ENCODE measurements at regions of chr2 and their contacts with region 1.

Region 1: DNA sequence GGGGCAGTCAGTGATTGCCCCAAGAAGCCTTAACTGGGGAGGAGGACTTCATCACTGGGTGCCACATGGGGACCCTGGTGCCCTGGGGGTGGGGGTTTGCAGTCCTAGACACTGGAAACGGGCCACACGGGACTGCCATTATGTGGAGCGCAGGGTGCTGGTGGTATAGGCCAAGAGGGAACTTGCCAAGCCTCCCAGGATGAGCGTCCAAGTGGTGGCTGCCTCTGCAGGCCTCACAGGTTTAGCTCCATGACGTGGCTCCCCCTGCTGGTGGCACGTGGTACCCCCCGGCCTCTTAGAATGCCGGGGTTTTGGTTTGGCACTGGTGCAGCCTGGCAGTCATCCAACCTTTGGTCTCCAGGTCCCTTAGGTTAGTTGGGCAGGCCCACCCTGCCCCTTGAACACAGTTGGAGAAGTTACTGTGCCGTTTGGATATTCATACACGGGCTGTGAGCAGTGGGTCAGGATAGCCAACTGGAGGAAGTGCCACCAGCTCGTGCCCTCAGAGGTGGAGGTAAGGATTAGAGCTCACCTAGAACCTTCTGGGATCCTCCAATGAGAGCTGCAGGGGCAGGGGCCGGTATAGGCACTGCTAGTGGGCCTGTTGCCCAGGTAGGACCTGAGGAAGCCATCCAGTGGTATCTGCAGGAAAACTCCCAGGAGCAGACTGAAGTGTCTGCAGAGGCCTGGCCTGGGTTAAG is 5.6 kb downstream of the PTMA start:
- DNase-seq: no peak
- H3K4me3 ChIP-seq: no peak overlapping the region
- CTCF ChIP-seq: peak; percentile 98

Region 2: GRCh38 chr2:231482806-231483391 is 231.0 kb before region 1 on chr2:
- CTCF ChIA-PET with region 1: no interaction called
- POLR2A ChIA-PET with region 1: no interaction called
- DNase-seq: no peak
- H3K4me3 ChIP-seq: peak overlapping the region; percentile 41
- CTCF ChIP-seq: peak; percentile 95

Region 3: DNA sequence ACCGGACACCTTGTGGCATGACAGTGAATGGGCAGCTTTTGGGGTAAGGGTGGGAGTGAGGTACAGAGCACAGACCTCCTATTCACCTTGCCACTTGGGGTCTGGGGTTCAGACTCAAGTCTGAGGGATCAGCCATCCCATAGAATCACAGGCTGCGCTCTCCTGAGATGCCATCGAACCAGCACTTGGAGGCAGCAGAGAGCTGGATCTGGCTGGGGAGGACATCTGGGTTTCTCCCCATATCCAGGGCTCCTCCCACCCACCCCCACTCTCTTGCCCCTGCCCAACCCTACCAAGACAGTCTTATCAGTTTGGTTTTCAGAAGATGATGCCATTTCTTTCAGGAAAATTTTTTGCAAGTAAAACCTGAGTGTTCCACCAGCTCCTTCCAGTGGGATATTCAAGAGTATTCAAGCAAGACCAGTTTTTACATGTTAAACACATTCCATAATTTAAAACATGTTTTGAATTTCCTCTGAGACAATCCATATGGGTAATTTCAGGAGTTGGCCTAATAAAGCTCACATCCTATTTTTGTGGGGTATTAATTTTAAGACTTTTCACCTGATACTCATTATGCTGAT is 150.4 kb before region 1 on chr2:
- CTCF ChIA-PET with region 1: interaction called, 10 read pairs
- POLR2A ChIA-PET with region 1: no interaction called
- DNase-seq: no peak
- H3K4me3 ChIP-seq: no peak overlapping the region
- CTCF ChIP-seq: peak; percentile 79

Region 4: DNA sequence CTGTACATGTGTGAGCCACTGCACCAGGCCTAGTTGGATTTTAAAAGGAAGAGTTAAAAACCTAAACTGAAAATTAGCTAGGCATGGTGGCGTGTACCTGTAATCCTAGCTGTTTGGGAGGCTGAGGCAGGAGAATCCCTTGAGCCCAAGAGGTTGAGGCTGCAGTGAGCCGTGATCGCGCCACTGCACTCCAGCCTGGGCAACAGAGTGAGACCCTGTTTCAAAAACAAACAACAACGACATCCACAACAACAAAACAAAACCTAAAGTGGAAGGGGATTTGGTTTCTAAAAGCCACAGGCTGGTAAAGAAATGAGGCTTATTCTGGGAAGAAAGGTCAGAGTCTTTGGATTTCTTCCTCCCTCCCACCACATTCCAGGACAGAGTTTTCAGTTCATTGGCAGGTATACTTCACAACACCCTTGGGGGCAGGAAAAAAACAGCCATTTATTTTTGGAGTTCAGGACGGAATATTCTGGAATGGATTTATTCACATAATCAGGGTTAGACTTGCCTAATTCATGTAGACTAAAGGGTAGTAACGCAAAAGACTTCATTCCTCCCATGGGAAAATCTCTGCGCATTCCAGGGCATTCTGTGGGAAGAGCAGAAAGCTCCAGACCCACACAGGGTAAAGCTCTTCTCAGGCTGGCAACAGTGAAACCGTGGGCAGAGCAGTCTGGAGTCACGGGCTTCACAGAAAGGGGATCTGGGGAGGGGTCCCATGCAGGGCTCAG is 86.3 kb before region 1 on chr2:
- CTCF ChIA-PET with region 1: interaction called, 47 read pairs
- POLR2A ChIA-PET with region 1: no interaction called
- DNase-seq: peak; percentile 74
- H3K4me3 ChIP-seq: peak overlapping the region; percentile 18
- CTCF ChIP-seq: no peak

Region 5: GRCh38 chr2:231662028-231662810 is 51.7 kb before region 1 on chr2:
- CTCF ChIA-PET with region 1: interaction called, 20 read pairs
- POLR2A ChIA-PET with region 1: interaction called, 11 read pairs
- DNase-seq: peak; percentile 61
- H3K4me3 ChIP-seq: peak overlapping the region; percentile 43
- CTCF ChIP-seq: no peak

Region 6: DNA sequence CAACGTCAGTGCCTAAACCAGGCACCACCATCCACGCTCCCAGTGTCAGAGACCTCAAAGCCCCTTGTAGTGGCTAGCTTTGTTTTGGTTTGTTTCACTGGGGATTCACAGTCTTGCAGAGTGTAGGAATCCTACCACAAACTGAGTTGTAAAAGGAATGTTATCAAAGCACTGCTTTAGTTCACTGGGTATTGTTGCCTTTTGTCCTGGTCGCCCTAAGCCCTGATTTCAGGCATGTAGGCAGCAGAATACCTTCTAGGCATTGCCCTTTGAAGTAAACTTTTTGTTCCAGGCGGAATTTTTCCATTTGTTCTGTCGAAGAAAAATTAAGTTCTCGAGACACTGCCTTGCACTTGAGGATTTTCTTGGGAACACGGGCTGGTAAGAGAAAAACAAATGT is 23.9 kb after region 1 on chr2:
- CTCF ChIA-PET with region 1: interaction called, 10 read pairs
- POLR2A ChIA-PET with region 1: no interaction called
- DNase-seq: no peak
- H3K4me3 ChIP-seq: no peak overlapping the region
- CTCF ChIP-seq: no peak

Region 7: GRCh38 chr2:231795291-231796040 is 81.6 kb after region 1 on chr2:
- CTCF ChIA-PET with region 1: interaction called, 12 read pairs
- POLR2A ChIA-PET with region 1: no interaction called
- DNase-seq: no peak
- H3K4me3 ChIP-seq: no peak overlapping the region
- CTCF ChIP-seq: peak; percentile 21

Region 8: DNA sequence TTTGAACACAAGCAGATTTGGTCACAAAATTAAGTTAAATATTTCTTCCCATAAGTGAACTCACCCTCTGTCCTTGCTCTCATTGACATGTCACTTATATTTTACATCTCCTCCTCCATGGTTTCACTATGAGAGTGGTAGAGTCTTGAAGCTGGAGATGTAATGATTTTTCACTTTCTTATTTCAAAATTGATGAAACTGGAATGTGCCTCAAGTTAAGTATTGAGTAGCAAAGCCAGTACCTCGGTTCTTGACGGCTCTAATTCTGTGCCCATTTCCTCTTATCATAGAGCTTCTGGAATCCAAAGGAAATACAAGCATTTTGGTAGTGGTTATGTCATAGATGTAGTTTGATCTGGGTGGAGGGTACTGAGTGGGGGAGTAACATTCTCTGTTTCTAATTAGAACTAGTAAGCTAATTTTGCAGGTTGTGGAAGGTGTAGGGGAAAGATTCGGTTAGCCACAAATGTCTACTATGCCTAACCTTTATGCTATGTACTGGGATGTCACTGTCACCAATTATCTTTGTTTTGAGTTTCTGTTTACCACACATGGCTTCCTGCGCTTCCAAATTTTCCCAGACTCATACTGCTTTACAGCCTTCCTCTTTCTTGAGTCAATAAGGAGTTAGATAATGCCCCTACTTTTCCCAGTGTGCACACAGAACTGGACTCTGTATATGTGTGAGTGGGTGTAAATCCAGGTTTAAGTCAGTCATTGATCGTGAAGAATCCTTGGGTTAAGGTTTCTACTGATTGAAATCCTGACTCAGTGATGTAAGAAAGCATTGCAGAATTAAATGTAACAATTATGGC is 344.4 kb after region 1 on chr2:
- CTCF ChIA-PET with region 1: no interaction called
- POLR2A ChIA-PET with region 1: no interaction called
- DNase-seq: no peak
- H3K4me3 ChIP-seq: no peak overlapping the region
- CTCF ChIP-seq: no peak